ENCODE measurements at regions of chr2 and their contacts with region 1.

Region 1: GRCh38 chr2:117835990-117836760 is 21.7 kb downstream of the DDX18 start:
- DNase-seq: no peak
- H3K4me3 ChIP-seq: peak overlapping the region; percentile 41
- H3K27me3 ChIP-seq: no peaks in the 10 kb centered on the region
- CTCF ChIP-seq: peak; percentile 98

Region 2: DNA sequence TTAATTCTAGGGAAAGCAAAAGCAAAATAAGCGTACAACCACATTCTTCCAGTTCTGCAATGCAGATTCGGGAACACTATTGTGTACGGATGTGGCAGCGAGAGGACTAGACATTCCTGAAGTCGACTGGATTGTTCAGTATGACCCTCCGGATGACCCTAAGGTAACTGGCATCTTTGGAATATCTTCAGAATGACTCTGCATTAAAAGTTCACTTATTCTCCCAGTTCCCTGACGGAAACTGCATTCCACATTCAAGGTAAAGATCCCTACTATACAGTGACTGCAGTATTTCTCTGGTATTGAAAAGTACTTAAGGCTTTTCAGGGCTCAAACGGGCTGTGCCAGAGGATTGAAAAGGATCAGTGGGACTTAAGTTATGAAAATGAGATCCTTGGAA is 10.7 kb before region 1 on chr2:
- CTCF ChIA-PET with region 1: interaction called, 11 read pairs
- POLR2A ChIA-PET with region 1: no interaction called
- DNase-seq: no peak
- H3K4me3 ChIP-seq: no peak overlapping the region
- H3K27me3 ChIP-seq: no peaks in the 10 kb centered on the region
- CTCF ChIP-seq: no peak

Region 3: GRCh38 chr2:117917223-117917917 is 81.2 kb after region 1 on chr2:
- CTCF ChIA-PET with region 1: interaction called, 10 read pairs
- POLR2A ChIA-PET with region 1: no interaction called
- DNase-seq: no peak
- H3K4me3 ChIP-seq: no peak overlapping the region
- H3K27me3 ChIP-seq: no peaks in the 10 kb centered on the region
- CTCF ChIP-seq: peak; percentile 45

Region 4: GRCh38 chr2:117989854-117990438 is 153.8 kb after region 1 on chr2:
- CTCF ChIA-PET with region 1: interaction called, 34 read pairs
- POLR2A ChIA-PET with region 1: no interaction called
- DNase-seq: no peak
- H3K4me3 ChIP-seq: no peak overlapping the region
- H3K27me3 ChIP-seq: no peaks in the 10 kb centered on the region
- CTCF ChIP-seq: no peak

Region 5: GRCh38 chr2:117997872-117998454 is 161.8 kb after region 1 on chr2:
- CTCF ChIA-PET with region 1: interaction called, 243 read pairs
- POLR2A ChIA-PET with region 1: interaction called, 3 read pairs
- DNase-seq: no peak
- H3K4me3 ChIP-seq: no peak overlapping the region
- H3K27me3 ChIP-seq: no peaks in the 10 kb centered on the region
- CTCF ChIP-seq: no peak

Region 6: DNA sequence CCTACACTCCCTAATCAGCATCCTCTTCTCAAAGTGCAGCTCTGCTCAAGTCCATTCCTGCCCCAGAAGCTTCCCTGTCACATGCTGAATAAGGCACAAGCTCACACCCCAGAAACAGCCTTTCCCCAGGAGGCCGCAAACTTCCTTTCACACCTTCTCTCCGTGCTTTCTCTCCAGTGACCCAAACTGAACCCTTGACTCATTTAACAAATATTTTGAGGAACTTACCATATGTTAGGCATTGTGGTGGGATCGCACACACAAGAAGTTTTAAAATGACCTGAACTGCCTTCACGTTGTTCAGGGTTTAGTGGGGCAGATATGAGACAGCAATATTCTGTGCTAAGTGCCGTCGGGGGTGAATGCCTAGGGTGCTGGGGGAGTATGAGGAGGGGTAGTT is 413.4 kb after region 1 on chr2:
- CTCF ChIA-PET with region 1: no interaction called
- POLR2A ChIA-PET with region 1: no interaction called
- DNase-seq: peak; percentile 88
- H3K4me3 ChIP-seq: no peak overlapping the region
- H3K27me3 ChIP-seq: no peaks in the 10 kb centered on the region
- CTCF ChIP-seq: no peak

Measured in BJ (cell line).